Activated B cell treated with CpG ODN at 0.5 μM for 24 hours (primary cell): ENCODE measurements at regions of chr5 and their contacts with region 1.

Region 1: DNA sequence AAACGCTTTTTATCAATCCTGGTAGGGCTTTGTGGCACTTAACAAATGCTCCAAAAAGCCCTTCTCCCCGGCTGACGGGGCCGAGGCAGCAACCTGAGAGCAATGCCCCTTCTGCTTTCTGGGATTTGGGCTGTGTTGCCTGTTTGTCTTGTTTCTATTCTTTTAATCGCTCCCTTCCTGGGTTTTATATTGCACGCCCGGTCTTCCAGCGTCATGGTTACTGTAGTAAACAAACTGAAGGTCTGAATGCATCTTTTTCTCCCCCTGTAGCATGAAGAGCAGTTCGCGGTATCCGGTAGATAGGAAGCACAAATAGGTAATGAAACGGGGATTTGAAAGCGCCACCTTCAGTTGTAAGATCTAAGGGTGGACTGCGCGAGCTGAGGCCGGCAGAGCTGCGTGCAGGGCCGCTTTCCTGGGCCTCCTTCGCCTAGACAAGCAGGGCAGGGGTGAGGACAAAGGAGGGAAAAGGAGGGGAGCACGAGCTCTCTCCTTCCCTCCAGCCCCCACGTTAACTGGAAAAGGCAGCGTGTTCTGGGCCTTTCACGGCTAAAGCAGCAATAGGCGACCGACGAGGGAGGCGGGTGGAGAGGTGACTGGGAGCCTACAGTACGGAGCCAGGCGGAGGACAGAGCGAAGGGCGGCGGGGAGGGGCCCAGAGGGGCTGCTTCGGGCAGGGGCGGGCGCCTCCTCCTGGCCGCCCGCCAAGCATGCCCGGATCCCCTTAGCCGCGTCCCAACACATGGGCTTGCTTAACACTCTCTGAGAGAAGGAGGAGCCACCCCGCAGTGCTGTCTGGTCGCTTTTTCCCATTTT is 49.3 kb upstream of the ZNF366 start:
- DNase-seq: peak; percentile 32
- ATAC-seq: peak; percentile 93
- H3K4me3 Mint-ChIP-seq: peak overlapping the region; percentile 78
- H3K27ac Mint-ChIP-seq: no peak overlapping the region
- H3K4me1 Mint-ChIP-seq: peaks cover 16% of the 10 kb centered on the region
- H3K27me3 Mint-ChIP-seq: peaks cover 29% of the 10 kb centered on the region
- CTCF ChIP-seq: no peak

Region 2: GRCh38 chr5:72366324-72366976 is 190.1 kb before region 1 on chr5:
- CTCF ChIA-PET with region 1: no interaction called
- POLR2A ChIA-PET with region 1: no interaction called
- intact Hi-C with region 1: loop called (anchors 1 kb)
- DNase-seq: no peak
- ATAC-seq: peak; percentile 68
- H3K4me3 Mint-ChIP-seq: no peak overlapping the region
- H3K27ac Mint-ChIP-seq: no peak overlapping the region
- H3K4me1 Mint-ChIP-seq: peaks cover 11% of the 10 kb centered on the region
- H3K27me3 Mint-ChIP-seq: no peaks in the 10 kb centered on the region
- CTCF ChIP-seq: no peak